ENCODE measurements at regions of chr14 and their contacts with region 1.

Region 1: DNA sequence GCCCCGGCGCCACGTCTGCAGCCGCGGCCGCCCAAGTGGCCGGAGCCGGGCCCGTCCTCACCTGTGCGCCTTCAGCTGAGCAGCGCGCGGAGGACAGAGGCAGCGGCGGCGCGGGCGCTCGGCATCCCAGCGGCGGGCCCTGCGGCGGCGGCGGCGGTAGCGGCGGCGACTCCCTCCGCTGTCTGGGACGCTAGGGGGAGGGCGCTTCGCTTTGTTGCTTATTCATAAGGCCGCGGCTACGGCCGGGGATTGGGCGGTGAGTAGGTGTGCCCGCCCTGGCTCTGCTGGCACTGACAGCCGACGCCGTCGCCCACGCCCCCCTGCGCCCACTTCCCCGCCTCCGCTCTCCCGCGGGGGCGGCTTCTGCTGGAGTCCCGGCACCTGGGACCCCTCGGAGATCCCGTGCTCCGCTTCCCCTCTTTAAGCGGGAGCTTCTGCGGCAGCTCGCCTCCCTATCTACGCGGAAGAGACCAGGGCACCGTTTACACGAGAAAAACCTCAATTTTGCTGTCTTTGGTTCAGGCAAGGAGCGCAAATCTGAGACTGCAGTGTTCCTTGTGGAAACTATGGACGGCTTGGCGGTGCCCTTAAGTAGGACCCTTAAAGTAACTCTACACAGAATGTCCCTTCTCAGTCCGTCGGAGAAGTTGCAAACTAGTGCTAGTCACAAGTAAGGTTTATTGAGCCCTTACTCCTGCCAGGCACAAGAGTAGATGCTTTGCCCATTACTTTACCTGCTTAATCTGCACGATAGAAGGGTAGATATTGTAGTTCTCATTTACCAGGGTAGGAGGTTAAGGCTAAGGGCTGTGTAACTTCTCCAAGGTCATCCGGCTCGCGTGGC is at the start of gene ARMH4:
- DNase-seq: peak; percentile 77
- H3K4me3 Mint-ChIP-seq: peak within 1 kb of the TSS; percentile 71
- H3K27ac Mint-ChIP-seq: no peak within 1 kb of the TSS
- H3K4me1 Mint-ChIP-seq: no peaks in the 10 kb centered on the region
- H3K27me3 Mint-ChIP-seq: peaks cover 61% of the 10 kb centered on the region
- CTCF ChIP-seq: no peak
- total RNA-seq, gene ARMH4: 0.07 TPM in 1 of 2 replicates, not detected in the other

Region 2: GRCh38 chr14:57987596-57988300 is 164.5 kb before region 1 on chr14:
- CTCF ChIA-PET with region 1: no interaction called
- intact Hi-C with region 1: no loop called
- DNase-seq: peak; percentile 2
- H3K4me3 Mint-ChIP-seq: no peak overlapping the region
- H3K27ac Mint-ChIP-seq: no peak overlapping the region
- H3K4me1 Mint-ChIP-seq: no peaks in the 10 kb centered on the region
- H3K27me3 Mint-ChIP-seq: peaks cover 50% of the 10 kb centered on the region
- CTCF ChIP-seq: no peak

Region 3: GRCh38 chr14:58166005-58166983 is 14.1 kb after region 1 on chr14:
- CTCF ChIA-PET with region 1: interaction called, 3 read pairs
- intact Hi-C with region 1: loop called (anchors 2 kb)
- DNase-seq: peak; percentile 85
- H3K4me3 Mint-ChIP-seq: no peak overlapping the region
- H3K27ac Mint-ChIP-seq: no peak overlapping the region
- H3K4me1 Mint-ChIP-seq: peaks cover 9% of the 10 kb centered on the region
- H3K27me3 Mint-ChIP-seq: peaks cover 39% of the 10 kb centered on the region
- CTCF ChIP-seq: peak; percentile 73